ENCODE measurements at regions of chr1 and their contacts with region 1.

Region 1: GRCh38 chr1:27044613-27045151 is 32.0 kb upstream of the TENT5B start:
- H3K4me3 ChIP-seq: no peak overlapping the region
- H3K27ac ChIP-seq: no peak overlapping the region
- H3K4me1 ChIP-seq: no peaks in the 10 kb centered on the region
- CTCF ChIP-seq: peak; percentile 92

Region 2: DNA sequence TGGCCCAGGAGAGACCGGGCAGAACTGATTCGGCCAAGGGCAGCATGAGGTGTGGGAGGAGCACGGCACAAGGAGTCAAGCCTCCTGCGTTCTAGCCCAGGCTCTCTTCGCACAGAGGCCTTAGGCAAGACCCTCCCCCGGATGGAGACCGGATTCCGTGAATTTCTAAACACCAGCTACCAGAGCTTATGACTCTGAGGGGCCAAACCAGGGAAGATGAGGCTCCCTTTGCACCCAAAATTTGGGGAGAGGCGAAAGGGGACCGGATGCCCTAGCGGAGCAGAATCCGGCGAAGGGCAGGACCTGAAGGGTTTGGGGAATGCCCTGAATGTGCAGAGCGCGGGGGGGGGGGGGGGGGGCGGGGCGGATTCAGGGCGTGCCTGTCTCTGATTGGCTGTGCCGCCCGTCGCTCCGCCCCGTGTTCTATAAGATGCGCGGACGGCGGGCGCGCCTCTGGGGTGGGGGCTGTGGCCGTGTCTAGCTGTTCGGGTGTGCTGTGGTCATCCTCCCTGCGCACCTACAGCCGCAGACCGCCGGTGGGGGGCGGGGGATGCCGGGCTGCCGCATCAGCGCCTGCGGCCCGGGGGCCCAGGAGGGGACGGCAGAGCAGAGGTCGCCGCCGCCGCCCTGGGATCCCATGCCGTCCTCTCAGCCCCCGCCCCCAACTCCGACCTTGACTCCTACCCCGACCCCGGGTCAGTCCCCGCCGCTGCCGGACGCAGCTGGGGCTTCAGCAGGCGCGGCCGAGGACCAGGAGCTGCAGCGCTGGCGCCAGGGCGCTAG is 51.3 kb before region 1 on chr1 and contains the start of gene TRNP1:
- CTCF ChIA-PET with region 1: interaction called, 141 read pairs
- POLR2A ChIA-PET with region 1: no interaction called
- H3K4me3 ChIP-seq: peak within 1 kb of the TSS; percentile 57
- H3K27ac ChIP-seq: peak within 1 kb of the TSS; percentile 44; the same call in 1 of the 2 replicates
- H3K4me1 ChIP-seq: no peaks in the 10 kb centered on the region; the same call in 1 of the 2 replicates
- CTCF ChIP-seq: peak; percentile 42; the same call in 1 of the 2 replicates

Region 3: GRCh38 chr1:27057801-27058625 is 13.3 kb after region 1 on chr1:
- CTCF ChIA-PET with region 1: interaction called, 92 read pairs
- POLR2A ChIA-PET with region 1: no interaction called
- H3K4me3 ChIP-seq: no peak overlapping the region
- H3K27ac ChIP-seq: no peak overlapping the region
- H3K4me1 ChIP-seq: no peaks in the 10 kb centered on the region
- CTCF ChIP-seq: no peak

Region 4: GRCh38 chr1:27077968-27078367 is 33.3 kb after region 1 on chr1:
- CTCF ChIA-PET with region 1: interaction called, 17 read pairs
- POLR2A ChIA-PET with region 1: no interaction called
- H3K4me3 ChIP-seq: no peak overlapping the region
- H3K27ac ChIP-seq: no peak overlapping the region
- H3K4me1 ChIP-seq: no peaks in the 10 kb centered on the region
- CTCF ChIP-seq: no peak

Region 5: DNA sequence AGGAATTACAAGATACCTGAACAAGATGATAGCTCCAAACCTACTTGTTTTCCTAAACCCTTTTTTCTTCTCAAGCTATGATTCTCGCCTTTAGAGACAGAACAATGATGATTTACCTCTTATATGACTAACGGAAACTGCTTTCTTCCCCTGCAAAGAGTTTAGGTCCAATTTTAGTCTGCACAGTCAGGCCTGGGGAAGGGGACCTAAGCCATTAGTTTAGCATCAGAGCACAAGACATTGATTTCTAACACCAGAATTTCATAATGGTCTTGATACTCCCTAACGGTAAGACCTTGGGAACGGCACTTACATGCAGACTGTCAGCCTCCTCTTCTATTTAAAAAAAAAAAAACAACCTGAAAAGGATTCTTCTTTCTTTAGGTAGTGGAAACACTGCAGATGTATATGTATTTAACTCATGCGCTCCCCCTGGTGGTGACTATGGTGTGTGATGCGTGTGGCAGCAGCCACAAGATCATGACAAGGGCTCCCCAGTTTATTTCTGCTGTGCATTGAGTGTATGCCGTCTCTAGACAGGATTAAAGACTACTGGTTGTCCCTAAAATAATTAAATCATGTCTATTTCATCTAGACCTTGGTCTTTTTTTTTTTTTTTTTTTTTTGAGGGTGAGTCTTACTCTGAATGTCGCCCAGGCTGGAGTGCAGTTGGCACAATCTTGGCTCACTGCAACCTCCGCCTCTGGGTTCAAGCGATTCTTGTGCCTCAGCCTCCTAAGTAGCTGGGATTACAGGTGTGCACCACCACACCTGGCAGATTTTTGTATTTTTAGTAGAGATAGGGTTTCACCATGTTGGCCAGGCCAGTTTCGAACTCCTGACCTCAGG is 240.0 kb after region 1 on chr1:
- CTCF ChIA-PET with region 1: interaction called, 41 read pairs
- POLR2A ChIA-PET with region 1: no interaction called
- H3K4me3 ChIP-seq: no peak overlapping the region
- H3K27ac ChIP-seq: no peak overlapping the region
- H3K4me1 ChIP-seq: no peaks in the 10 kb centered on the region
- CTCF ChIP-seq: peak; percentile 49

Region 6: GRCh38 chr1:27392096-27392777 is 347.6 kb after region 1 on chr1 and contains the start of gene GPR3:
- CTCF ChIA-PET with region 1: interaction called, 18 read pairs
- POLR2A ChIA-PET with region 1: no interaction called
- H3K4me3 ChIP-seq: peak within 1 kb of the TSS; percentile 45
- H3K27ac ChIP-seq: no peak within 1 kb of the TSS
- H3K4me1 ChIP-seq: no peaks in the 10 kb centered on the region
- CTCF ChIP-seq: peak; percentile 83